MCF 10A (cell line): ENCODE measurements at regions of chr16 and their contacts with region 1.

Region 1: DNA sequence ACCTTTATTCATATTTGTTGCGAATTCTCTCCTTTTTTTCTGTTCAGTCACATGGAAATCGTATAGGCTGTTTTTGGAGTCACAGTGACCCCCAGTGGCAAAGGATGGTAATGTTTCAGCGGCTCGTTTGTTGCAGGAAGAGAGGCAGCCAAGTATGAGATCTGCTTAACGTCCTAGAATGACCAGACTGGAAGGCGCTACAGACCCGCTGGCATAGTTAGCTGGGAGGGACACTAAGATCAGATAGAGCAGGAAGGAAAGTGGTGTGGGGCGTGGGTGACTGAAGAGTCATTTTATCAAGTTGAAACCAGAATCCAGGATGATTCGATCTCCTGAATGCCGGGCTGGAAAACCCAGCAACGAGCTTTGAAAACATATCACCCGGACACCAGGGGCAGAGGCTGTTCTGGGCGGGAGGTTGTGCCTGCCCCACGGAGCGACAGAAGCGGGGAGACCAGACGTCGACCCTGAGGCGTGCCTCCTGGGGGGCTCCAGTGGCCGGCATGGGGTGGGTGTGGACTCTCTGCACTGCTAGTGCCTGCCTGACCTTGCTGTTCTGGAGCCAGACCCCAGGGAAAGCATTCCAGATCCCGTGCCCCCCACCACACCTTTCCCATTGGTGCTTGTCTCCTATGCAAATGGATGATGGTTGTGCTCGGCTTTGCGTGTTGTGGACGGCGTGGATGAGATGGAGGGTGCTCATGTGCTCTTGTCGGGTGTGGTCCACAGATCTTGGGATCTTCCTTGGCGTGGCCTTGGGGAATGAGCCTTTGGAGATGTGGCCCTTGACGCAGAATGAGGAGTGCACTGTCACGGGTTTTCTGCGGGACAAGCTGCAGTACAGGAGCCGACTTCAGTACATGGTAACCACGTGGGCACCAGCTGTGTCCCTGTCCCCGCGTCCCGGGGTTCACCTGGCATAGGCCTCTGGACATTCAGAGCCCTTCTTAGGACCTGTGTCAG is 7.7 kb downstream of the IL34 start:
- DNase-seq: peak; percentile 89
- H3K4me3 Mint-ChIP-seq: peak overlapping the region; percentile 45
- H3K27ac Mint-ChIP-seq: no peak overlapping the region
- H3K4me1 Mint-ChIP-seq: peaks cover 11% of the 10 kb centered on the region
- H3K27me3 Mint-ChIP-seq: no peaks in the 10 kb centered on the region
- CTCF ChIP-seq: peak; percentile 78

Region 2: DNA sequence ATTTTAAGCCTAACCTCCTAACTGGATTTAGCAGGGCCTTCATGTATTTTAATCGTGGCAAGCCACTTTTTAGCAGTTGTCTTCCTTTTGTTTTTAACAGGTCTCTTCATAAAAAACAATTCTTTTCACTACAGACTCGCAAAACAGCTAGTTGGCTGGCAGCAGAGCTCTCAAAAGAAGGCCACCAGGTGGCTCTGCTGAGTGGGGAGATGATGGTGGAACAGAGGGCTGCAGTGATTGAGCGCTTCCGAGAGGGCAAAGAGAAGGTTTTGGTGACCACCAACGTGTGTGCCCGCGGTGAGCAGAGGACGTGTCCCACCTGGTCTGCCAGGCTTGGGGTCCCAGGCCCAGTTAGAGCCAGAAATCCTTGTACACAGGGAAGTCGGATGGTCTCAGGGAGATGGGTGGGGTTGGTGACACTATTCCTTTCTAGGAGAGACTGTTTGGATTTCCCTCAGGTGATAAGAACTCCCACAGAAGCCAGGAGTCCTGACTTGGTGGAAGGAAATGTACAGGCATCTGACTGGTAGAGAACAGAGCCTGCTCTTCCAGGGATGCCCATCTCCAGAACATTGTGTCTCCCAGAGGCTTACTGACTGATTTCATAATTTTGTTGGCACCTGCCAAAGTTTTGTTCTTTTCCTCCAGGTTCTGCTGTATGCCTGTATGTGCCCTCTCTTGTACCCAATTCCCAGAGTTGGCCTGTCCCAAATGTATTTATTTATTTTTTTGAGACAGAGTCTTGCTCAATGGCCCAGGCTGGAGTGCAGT is 322.3 kb before region 1 on chr16:
- CTCF ChIA-PET with region 1: interaction called, 5 read pairs
- POLR2A ChIA-PET with region 1: no interaction called
- intact Hi-C with region 1: loop called (anchors 5 kb)
- DNase-seq: no peak
- H3K4me3 Mint-ChIP-seq: no peak overlapping the region
- H3K27ac Mint-ChIP-seq: no peak overlapping the region
- H3K4me1 Mint-ChIP-seq: no peaks in the 10 kb centered on the region
- H3K27me3 Mint-ChIP-seq: no peaks in the 10 kb centered on the region
- CTCF ChIP-seq: peak; percentile 35

Region 3: GRCh38 chr16:70364399-70364798 is 289.7 kb before region 1 on chr16:
- CTCF ChIA-PET with region 1: interaction called, 17 read pairs
- POLR2A ChIA-PET with region 1: interaction called, 4 read pairs
- intact Hi-C with region 1: no loop called
- DNase-seq: no peak
- H3K4me3 Mint-ChIP-seq: no peak overlapping the region
- H3K27ac Mint-ChIP-seq: no peak overlapping the region
- H3K4me1 Mint-ChIP-seq: no peaks in the 10 kb centered on the region
- H3K27me3 Mint-ChIP-seq: no peaks in the 10 kb centered on the region
- CTCF ChIP-seq: no peak

Region 4: DNA sequence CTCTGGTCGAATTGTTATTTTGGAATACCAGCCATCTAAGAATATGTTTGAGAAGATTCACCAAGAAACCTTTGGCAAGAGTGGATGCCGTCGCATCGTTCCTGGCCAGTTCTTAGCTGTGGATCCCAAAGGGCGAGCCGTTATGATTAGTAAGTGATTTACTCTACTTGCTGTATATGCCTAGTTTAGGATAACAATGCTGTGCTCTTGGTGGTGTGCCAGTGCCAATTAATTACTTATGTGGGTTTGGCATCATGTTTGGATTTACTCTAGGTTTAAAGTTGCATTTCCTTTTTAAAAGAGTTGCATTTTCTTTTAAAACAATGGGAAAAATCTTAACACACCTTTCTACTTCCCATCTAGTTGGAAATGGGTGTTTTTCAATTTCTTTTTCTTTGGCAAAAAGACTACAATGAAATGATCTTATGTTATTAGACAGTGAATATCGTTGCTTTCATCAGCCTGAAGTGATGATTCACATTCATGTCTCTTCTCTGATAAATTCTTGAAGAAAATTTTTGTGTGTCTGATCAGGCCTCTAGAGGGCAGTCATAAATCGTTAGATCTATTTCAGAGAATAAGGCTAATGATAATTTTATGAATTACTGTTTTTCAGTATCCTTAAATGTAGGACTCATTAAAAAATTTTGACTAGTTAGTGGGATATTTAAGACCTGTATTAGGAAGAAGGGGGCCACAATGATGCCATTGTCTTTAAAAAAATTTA is 124.9 kb before region 1 on chr16:
- CTCF ChIA-PET with region 1: interaction called, 43 read pairs
- POLR2A ChIA-PET with region 1: no interaction called
- intact Hi-C with region 1: loop called (anchors 1 kb)
- DNase-seq: peak; percentile 62
- H3K4me3 Mint-ChIP-seq: peak overlapping the region; percentile 57
- H3K27ac Mint-ChIP-seq: no peak overlapping the region
- H3K4me1 Mint-ChIP-seq: peaks cover 21% of the 10 kb centered on the region
- H3K27me3 Mint-ChIP-seq: no peaks in the 10 kb centered on the region
- CTCF ChIP-seq: peak; percentile 64

Region 5: DNA sequence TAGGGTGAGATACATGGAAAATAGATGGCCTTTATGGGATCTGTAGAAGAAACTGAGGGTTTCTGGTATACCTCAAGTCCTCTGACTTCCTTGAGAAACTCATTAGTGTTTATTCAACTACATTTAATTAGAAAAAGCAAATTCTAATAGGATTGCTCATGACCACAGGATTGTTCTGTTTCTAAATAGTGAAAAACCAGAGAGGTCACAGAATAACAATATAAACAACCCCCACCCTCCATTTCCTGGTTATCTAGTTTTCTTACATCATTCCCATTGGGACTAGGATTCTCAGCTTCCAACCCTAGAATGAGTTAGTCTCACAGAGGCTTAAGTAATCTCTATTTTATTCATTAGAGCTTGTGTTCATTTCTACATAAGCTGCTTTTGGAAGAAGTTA is 100.4 kb before region 1 on chr16:
- CTCF ChIA-PET with region 1: interaction called, 12 read pairs
- POLR2A ChIA-PET with region 1: interaction called, 3 read pairs
- intact Hi-C with region 1: no loop called
- DNase-seq: peak; percentile 39
- H3K4me3 Mint-ChIP-seq: no peak overlapping the region
- H3K27ac Mint-ChIP-seq: peak overlapping the region; percentile 42
- H3K4me1 Mint-ChIP-seq: peaks cover 5% of the 10 kb centered on the region
- H3K27me3 Mint-ChIP-seq: no peaks in the 10 kb centered on the region
- CTCF ChIP-seq: no peak

Region 6: DNA sequence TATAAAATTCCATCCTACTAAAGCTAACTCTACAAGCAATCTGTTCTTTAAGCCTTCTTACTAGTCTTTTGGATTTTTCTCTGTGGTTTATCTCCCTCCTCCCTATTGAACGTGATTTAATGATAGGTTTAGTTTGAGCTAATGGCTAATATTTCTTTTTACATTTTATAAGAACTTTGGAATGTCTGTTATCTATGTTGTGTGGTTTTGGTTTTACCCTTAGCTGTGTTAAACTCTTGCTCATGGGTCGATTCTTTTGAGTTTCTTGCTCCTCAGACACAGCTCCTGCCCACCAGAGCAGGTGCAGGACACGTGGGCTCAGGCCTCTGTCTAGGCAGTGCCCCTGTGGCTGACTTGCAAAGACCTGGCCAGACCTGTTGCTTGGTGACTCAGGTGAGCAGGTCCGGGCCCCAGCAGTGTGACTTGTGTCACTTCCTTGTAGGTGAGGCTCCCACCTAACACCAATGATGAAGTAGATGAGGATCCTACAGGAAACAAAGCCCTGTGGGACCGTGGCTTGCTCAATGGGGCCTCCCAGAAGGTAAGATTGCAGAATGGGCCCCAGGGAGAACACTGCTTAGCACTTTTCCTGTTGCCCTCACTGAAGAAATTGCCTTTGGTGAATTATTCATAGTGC is 85.4 kb before region 1 on chr16:
- CTCF ChIA-PET with region 1: interaction called, 22 read pairs
- POLR2A ChIA-PET with region 1: interaction called, 6 read pairs
- intact Hi-C with region 1: no loop called
- DNase-seq: no peak
- H3K4me3 Mint-ChIP-seq: no peak overlapping the region
- H3K27ac Mint-ChIP-seq: peak overlapping the region; percentile 67
- H3K4me1 Mint-ChIP-seq: peaks cover 20% of the 10 kb centered on the region
- H3K27me3 Mint-ChIP-seq: no peaks in the 10 kb centered on the region
- CTCF ChIP-seq: no peak

Region 7: GRCh38 chr16:70588565-70588964 is 65.5 kb before region 1 on chr16:
- CTCF ChIA-PET with region 1: interaction called, 11 read pairs
- POLR2A ChIA-PET with region 1: interaction called, 3 read pairs
- intact Hi-C with region 1: no loop called
- DNase-seq: no peak
- H3K4me3 Mint-ChIP-seq: no peak overlapping the region
- H3K27ac Mint-ChIP-seq: peak overlapping the region; percentile 63
- H3K4me1 Mint-ChIP-seq: peaks cover 9% of the 10 kb centered on the region
- H3K27me3 Mint-ChIP-seq: no peaks in the 10 kb centered on the region
- CTCF ChIP-seq: no peak

Region 8: DNA sequence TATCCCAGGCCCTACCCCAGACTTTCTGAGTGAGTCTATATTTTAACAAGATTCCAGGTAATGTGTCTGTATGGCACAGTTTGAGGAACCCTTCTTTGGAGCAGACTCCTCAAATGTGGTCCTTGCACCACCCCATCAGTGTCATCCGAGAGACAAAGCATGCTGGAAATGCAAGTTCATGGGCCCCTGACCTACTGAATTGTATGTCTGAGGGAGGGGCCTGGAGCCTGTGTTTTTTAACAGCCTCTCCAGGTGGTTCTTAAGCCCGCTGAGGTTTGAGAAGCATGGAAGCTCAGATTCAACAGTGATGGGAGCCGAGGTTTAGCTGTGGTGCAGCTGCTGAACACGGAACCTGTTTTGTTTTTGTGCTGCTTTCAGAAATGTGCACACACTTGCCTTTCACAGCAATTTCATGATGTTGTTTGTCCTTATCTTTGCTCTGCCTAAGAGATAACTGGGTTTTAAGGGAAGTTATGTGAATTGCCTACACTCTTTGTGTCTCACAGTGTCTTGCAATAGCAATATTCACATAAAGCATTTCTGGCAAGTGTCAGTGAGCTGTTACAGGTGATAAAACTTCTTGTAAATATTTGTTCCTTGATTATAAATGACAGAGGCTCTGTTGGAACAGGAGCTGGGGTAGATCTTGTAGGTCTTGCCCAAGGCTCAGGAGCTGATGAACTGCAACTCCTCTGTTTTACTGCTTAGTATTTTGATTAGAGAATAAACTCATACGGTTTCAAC is 39.7 kb before region 1 on chr16:
- CTCF ChIA-PET with region 1: no interaction called
- POLR2A ChIA-PET with region 1: no interaction called
- intact Hi-C with region 1: no loop called
- DNase-seq: no peak
- H3K4me3 Mint-ChIP-seq: no peak overlapping the region
- H3K27ac Mint-ChIP-seq: no peak overlapping the region
- H3K4me1 Mint-ChIP-seq: peaks cover 11% of the 10 kb centered on the region
- H3K27me3 Mint-ChIP-seq: no peaks in the 10 kb centered on the region
- CTCF ChIP-seq: no peak

Region 9: GRCh38 chr16:70704586-70704985 is 50.5 kb after region 1 on chr16:
- CTCF ChIA-PET with region 1: no interaction called
- POLR2A ChIA-PET with region 1: no interaction called
- intact Hi-C with region 1: no loop called
- DNase-seq: no peak
- H3K4me3 Mint-ChIP-seq: no peak overlapping the region
- H3K27ac Mint-ChIP-seq: no peak overlapping the region
- H3K4me1 Mint-ChIP-seq: peaks cover 33% of the 10 kb centered on the region
- H3K27me3 Mint-ChIP-seq: no peaks in the 10 kb centered on the region
- CTCF ChIP-seq: no peak